ENCODE measurements at regions of chr6 and their contacts with region 1.

Region 1: GRCh38 chr6:44172731-44173500 is 14.3 kb downstream of the CAPN11 start:
- DNase-seq: peak; percentile 83 to 89
- H3K4me3 ChIP-seq: no peak overlapping the region
- H3K27ac ChIP-seq: no peak overlapping the region
- H3K4me1 ChIP-seq: no peaks in the 10 kb centered on the region
- H3K27me3 ChIP-seq: no peaks in the 10 kb centered on the region
- CTCF ChIP-seq: peak; percentile 80 to 95 (median 93)
- POLR2A ChIP-seq: no peak

Region 2: DNA sequence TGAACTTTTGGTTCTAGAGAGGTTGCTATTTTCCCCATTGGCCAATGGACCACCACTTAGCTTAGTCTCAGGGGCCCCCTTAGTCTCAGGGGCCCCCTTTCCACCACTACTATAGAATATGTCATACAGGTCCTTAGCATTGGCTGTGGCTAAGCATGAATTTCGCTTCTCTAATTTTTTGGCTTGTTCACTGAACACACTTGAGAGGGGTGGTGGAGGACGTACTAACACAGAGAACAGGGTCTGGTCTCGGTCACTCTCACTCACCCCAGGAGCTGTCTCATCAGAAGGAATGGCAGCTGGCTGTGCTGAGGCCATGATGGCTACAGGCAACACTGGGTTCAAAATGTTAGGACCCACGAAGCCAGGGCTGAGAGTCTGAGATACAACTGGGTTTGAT is 833.7 kb before region 1 on chr6:
- intact Hi-C with region 1: no loop called
- DNase-seq: no peak
- H3K4me3 ChIP-seq: no peak overlapping the region
- H3K27ac ChIP-seq: no peak overlapping the region
- H3K4me1 ChIP-seq: no peaks in the 10 kb centered on the region
- H3K27me3 ChIP-seq: no peaks in the 10 kb centered on the region
- CTCF ChIP-seq: no peak
- POLR2A ChIP-seq: no peak

Region 3: GRCh38 chr6:44237813-44238433 is 65.0 kb after region 1 on chr6:
- intact Hi-C with region 1: loop called (anchors 5 kb)
- DNase-seq: peak; percentile 75 to 85
- H3K4me3 ChIP-seq: peak overlapping the region; percentile 53 to 78 (median 64)
- H3K27ac ChIP-seq: peak overlapping the region; percentile 99
- H3K4me1 ChIP-seq: peaks cover 10 to 26% of the 10 kb centered on the region in 2 donors
- H3K27me3 ChIP-seq: no peaks in the 10 kb centered on the region
- CTCF ChIP-seq: peak; percentile 98 to 100 (median 99)
- POLR2A ChIP-seq: peak; percentile 10

Measured in breast epithelium (tissue), 4 donors.